Psoas muscle (tissue), 8 donors: ENCODE measurements at regions of chr3 and their contacts with region 1.

Region 1: DNA sequence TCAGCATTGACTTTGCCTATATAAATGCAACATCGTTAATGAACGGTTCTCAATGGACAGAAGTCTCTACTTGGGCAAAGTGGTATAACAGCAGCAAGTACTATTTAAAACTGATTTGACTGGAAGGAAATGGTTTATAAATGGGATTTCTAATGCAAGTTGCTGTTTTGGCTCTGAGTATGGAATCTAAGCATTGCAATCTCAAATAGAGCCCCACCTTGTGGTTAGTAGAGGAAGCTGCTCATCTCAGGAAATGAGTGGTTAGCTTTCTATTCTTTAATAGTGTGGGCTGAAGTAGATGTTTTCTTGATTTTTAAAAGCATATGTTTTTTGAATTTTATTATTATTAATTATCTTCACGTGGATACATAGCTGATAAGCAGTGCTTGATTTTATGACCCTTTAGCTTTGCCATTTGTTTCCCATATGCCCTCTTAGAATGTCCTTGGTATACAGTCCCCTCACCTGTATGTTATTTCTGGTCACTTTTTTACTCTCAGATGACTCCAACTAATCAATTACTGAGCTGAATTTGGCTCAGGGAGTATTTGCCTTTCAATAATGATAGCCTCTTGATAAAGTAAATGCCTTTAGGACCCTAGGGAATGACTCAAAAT is 67.1 kb downstream of the OXSM start:
- DNase-seq: no peak
- ATAC-seq: peak in 2 of 4 donors; percentile 56 to 73
- H3K4me3 ChIP-seq: no peak overlapping the region
- H3K27ac ChIP-seq: no peak overlapping the region
- H3K4me1 ChIP-seq: no peaks in the 10 kb centered on the region
- H3K27me3 ChIP-seq: no peaks in the 10 kb centered on the region
- CTCF ChIP-seq: peak; percentile 59

Region 2: GRCh38 chr3:24929521-24929920 is 927.5 kb before region 1 on chr3:
- intact Hi-C with region 1: no loop called
- DNase-seq: no peak
- ATAC-seq: no peak
- H3K4me3 ChIP-seq: no peak overlapping the region
- H3K27ac ChIP-seq: no peak overlapping the region
- H3K4me1 ChIP-seq: no peaks in the 10 kb centered on the region
- H3K27me3 ChIP-seq: no peaks in the 10 kb centered on the region
- CTCF ChIP-seq: no peak

Region 3: DNA sequence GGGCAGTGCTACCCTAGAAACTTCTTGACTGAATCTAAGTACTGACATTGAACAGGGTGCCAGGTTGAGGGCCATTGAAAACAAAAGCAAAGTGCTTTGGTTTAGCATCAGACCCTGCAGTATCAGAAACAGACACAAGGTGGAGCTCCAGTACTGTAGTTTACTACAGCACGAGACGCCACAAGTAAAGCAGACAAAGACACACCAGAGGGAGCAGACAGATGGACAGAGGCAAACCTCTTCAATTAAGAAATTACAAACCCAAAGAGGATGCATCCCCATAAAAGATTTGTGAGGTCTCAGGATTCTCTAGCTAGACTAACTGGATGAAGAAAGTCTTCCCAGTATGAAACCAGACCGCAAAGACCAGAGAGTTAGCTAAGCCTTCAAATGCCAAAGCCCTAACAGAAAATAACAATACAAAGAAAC is 208.9 kb before region 1 on chr3:
- intact Hi-C with region 1: loop called (anchors 2 kb)
- DNase-seq: no peak
- ATAC-seq: peak; percentile 91 to 96 (median 94)
- H3K4me3 ChIP-seq: no peak overlapping the region
- H3K27ac ChIP-seq: no peak overlapping the region
- H3K4me1 ChIP-seq: peaks cover 13% of the 10 kb centered on the region
- H3K27me3 ChIP-seq: no peaks in the 10 kb centered on the region
- CTCF ChIP-seq: peak; percentile 93